K562 (cell line): ENCODE measurements at regions of chr12 and their contacts with region 1.

Region 1: DNA sequence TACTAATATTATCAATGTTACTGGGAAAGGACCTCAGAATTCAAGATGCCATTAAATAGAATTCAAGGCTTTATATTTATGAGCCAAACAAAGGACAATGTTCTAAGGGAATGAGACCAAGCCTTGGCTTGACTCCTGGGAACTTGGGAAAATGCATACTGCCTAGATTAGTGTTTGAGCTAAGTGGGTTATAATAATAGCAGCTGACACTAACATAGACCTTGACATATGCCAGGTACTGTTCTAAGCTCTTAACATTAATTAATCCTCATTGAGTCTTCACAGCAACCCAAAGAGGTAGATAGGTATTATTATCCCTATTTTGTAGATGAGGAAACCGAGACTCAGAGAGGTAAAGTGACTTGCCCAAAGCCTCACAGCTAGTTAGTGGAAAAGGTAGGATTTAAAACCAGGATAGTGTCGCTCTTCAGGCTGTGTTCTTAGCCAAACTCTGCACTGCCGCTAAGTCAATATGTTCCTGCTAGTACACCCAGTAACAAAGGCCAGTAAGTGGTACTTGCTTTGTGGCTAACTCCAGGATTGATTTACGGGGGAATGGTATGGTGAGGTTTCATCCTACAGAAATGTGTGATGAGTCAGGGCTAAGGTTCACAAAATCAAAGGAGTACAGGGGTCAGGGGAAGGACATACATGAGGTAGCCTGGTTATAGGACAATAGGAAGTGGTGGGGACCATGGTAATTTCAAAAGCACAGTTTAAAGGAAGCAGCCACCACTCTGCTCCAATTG is 35.8 kb upstream of the PRKAB1 start:
- DNase-seq: no peak
- ATAC-seq: no peak
- H3K4me3 ChIP-seq: no peak overlapping the region
- H3K27ac ChIP-seq: no peak overlapping the region
- H3K4me1 ChIP-seq: peaks cover 0 to 14% of the 10 kb centered on the region in 2 experiments; a peak in 2 of 5 replicates
- H3K27me3 ChIP-seq: peaks cover 3 to 25% of the 10 kb centered on the region in 2 experiments; a peak in 2 of 5 replicates
- CTCF ChIP-seq: no peak
- EP300 ChIP-seq: no peak
- POLR2A ChIP-seq: no peak
- RAD21 ChIP-seq: no peak

Region 2: DNA sequence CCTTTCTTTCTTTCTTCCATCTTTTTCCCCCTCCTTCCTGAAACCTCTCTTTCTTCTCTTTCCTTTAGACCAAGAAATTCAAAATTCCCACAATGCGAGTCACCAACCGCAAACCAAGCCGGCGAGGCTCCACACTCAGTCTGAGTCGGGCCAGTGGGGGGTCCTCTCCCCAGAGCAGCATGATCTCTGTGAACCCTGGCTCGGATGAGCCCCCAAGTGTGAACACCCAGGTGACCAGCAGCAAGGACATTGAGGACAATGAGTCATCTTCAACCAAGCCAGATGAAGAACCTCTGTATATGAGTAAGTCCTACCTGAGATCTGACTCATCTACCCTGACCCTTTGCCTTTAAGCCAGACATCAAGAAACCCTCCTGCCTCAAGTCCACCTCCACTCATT is 127.1 kb before region 1 on chr12:
- CTCF ChIA-PET with region 1: no interaction called
- POLR2A ChIA-PET with region 1: no interaction called
- in situ Hi-C with region 1: no loop called
- intact Hi-C with region 1: no loop called
- DNase-seq: no peak
- ATAC-seq: no peak
- H3K4me3 ChIP-seq: no peak overlapping the region
- H3K27ac ChIP-seq: no peak overlapping the region
- H3K4me1 ChIP-seq: no peaks in the 10 kb centered on the region
- H3K27me3 ChIP-seq: no peaks in the 10 kb centered on the region; a peak in 1 of 5 replicates
- CTCF ChIP-seq: no peak
- EP300 ChIP-seq: no peak
- POLR2A ChIP-seq: no peak
- RAD21 ChIP-seq: no peak

Region 3: GRCh38 chr12:119594772-119595445 is 37.2 kb before region 1 on chr12:
- CTCF ChIA-PET with region 1: no interaction called
- POLR2A ChIA-PET with region 1: no interaction called
- in situ Hi-C with region 1: no loop called
- intact Hi-C with region 1: loop called (anchors 5 kb)
- DNase-seq: no peak
- ATAC-seq: no peak; the same call in 2 of the 3 replicates
- H3K4me3 ChIP-seq: no peak overlapping the region
- H3K27ac ChIP-seq: no peak overlapping the region
- H3K4me1 ChIP-seq: peaks cover 8 to 18% of the 10 kb centered on the region in 2 experiments; a peak in 4 of 5 replicates
- H3K27me3 ChIP-seq: peaks cover 28 to 35% of the 10 kb centered on the region in 2 experiments; a peak in 4 of 5 replicates
- CTCF ChIP-seq: no peak
- EP300 ChIP-seq: no peak
- POLR2A ChIP-seq: no peak
- RAD21 ChIP-seq: no peak

Region 4: GRCh38 chr12:119642986-119643385 is 10.9 kb after region 1 on chr12:
- CTCF ChIA-PET with region 1: no interaction called
- POLR2A ChIA-PET with region 1: no interaction called
- in situ Hi-C with region 1: no loop called
- intact Hi-C with region 1: no loop called
- DNase-seq: peak; percentile 29 to 38 (median 35)
- ATAC-seq: peak; percentile 87
- H3K4me3 ChIP-seq: no peak overlapping the region
- H3K27ac ChIP-seq: no peak overlapping the region
- H3K4me1 ChIP-seq: no peaks in the 10 kb centered on the region
- H3K27me3 ChIP-seq: peaks cover 13 to 17% of the 10 kb centered on the region in 2 experiments; a peak in 2 of 5 replicates
- CTCF ChIP-seq: peak; percentile 60 to 73 (median 61)
- EP300 ChIP-seq: no peak
- POLR2A ChIP-seq: no peak
- RAD21 ChIP-seq: no peak

Region 5: DNA sequence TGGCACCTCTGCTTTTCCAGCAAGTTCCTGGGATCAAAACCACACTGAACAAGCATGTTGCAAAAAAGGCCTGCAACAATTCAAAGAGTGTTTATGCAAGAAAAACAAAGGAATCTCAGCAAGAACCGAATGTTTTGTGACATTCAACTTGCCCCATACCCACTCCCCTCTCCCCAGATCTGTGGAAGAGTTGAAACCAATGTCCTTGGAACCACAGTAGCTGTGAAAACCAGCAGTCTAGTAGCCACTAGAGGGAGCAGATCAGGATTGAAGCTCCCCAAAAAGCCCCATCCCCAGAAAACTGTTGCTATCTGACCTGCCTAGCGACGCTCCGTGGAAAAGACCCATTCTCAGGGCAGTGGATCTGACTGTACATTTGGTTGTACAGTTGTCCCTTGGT is 62.9 kb after region 1 on chr12:
- CTCF ChIA-PET with region 1: no interaction called
- POLR2A ChIA-PET with region 1: no interaction called
- in situ Hi-C with region 1: no loop called
- intact Hi-C with region 1: no loop called
- DNase-seq: peak; percentile 31 to 37 (median 34)
- ATAC-seq: peak; percentile 80
- H3K4me3 ChIP-seq: no peak overlapping the region
- H3K27ac ChIP-seq: no peak overlapping the region
- H3K4me1 ChIP-seq: peaks cover 0 to 2% of the 10 kb centered on the region in 2 experiments; a peak in 1 of 5 replicates
- H3K27me3 ChIP-seq: no peaks in the 10 kb centered on the region
- CTCF ChIP-seq: peak; percentile 39 to 62 (median 58)
- EP300 ChIP-seq: no peak
- POLR2A ChIP-seq: no peak
- RAD21 ChIP-seq: 0 out of 4 replicates have a peak, but pooled peaks of 1 of the 2 experiments have one; percentile 21

Region 6: DNA sequence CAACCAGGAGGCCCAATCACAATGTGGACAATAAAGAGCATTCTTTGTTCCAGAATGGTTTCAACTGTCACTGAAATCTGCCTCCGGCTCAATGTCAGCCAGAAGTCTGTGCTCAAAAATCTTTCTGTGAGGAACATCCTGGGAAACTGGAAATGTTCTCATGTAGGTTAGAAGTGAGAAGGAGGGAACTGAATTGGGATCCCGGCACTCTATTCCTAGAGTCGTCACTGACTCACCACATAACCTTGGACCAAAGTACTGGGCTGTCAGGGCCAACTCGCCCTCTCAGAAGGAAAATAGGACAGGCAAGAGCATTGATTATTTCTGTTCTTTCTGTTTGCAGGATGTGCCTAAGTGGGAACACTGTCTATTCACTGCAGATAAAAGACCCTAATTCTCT is 93.4 kb after region 1 on chr12:
- CTCF ChIA-PET with region 1: no interaction called
- POLR2A ChIA-PET with region 1: no interaction called
- in situ Hi-C with region 1: no loop called
- intact Hi-C with region 1: no loop called
- DNase-seq: no peak
- ATAC-seq: no peak
- H3K4me3 ChIP-seq: no peak overlapping the region
- H3K27ac ChIP-seq: no peak overlapping the region
- H3K4me1 ChIP-seq: no peaks in the 10 kb centered on the region
- H3K27me3 ChIP-seq: no peaks in the 10 kb centered on the region
- CTCF ChIP-seq: no peak
- EP300 ChIP-seq: no peak
- POLR2A ChIP-seq: no peak
- RAD21 ChIP-seq: no peak